ENCODE measurements at regions of chr5 and their contacts with region 1.

Region 1: GRCh38 chr5:148957591-148958202 is 105.2 kb downstream of the SH3TC2 start:
- DNase-seq: peak; percentile 27
- ATAC-seq: peak; percentile 66
- H3K4me3 Mint-ChIP-seq: no peak overlapping the region
- H3K27ac Mint-ChIP-seq: no peak overlapping the region
- H3K4me1 Mint-ChIP-seq: no peaks in the 10 kb centered on the region
- H3K27me3 Mint-ChIP-seq: peaks cover 2% of the 10 kb centered on the region
- CTCF ChIP-seq: no peak

Region 2: GRCh38 chr5:148746826-148747535 is 210.7 kb before region 1 on chr5:
- CTCF ChIA-PET with region 1: interaction called, 548 read pairs
- POLR2A ChIA-PET with region 1: no interaction called
- intact Hi-C with region 1: no loop called
- DNase-seq: no peak
- ATAC-seq: peak; percentile 49
- H3K4me3 Mint-ChIP-seq: no peak overlapping the region
- H3K27ac Mint-ChIP-seq: peak overlapping the region; percentile 36
- H3K4me1 Mint-ChIP-seq: peaks cover 15% of the 10 kb centered on the region
- H3K27me3 Mint-ChIP-seq: no peaks in the 10 kb centered on the region
- CTCF ChIP-seq: no peak

Region 3: GRCh38 chr5:148820461-148821395 is 137.0 kb before region 1 on chr5:
- CTCF ChIA-PET with region 1: interaction called, 55 read pairs
- POLR2A ChIA-PET with region 1: interaction called, 5 read pairs
- intact Hi-C with region 1: loop called (anchors 1 kb)
- DNase-seq: no peak
- ATAC-seq: peak; percentile 48
- H3K4me3 Mint-ChIP-seq: no peak overlapping the region
- H3K27ac Mint-ChIP-seq: no peak overlapping the region
- H3K4me1 Mint-ChIP-seq: peaks cover 56% of the 10 kb centered on the region
- H3K27me3 Mint-ChIP-seq: no peaks in the 10 kb centered on the region
- CTCF ChIP-seq: no peak

Region 4: DNA sequence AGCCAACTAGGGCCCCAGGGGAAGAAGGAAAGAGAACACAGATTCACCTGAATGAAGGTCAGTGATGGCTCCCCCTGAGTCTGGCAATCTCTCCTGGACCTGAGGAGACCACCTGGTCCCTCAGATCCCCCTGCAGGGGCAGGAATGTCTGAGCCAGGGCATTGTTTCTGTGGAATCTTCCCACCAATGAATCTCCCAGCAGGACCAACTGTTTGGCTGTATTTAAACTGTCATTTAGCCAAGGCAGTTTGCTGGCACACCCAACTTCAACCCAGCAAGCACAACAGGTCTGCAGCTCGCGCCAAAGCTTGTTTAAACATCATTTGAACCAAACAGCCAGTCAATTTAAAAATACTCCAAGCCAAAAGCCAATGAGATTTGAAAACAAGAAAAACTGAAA is 12.5 kb after region 1 on chr5:
- CTCF ChIA-PET with region 1: interaction called, 13 read pairs
- POLR2A ChIA-PET with region 1: no interaction called
- intact Hi-C with region 1: no loop called
- DNase-seq: no peak
- ATAC-seq: no peak
- H3K4me3 Mint-ChIP-seq: no peak overlapping the region
- H3K27ac Mint-ChIP-seq: no peak overlapping the region
- H3K4me1 Mint-ChIP-seq: no peaks in the 10 kb centered on the region
- H3K27me3 Mint-ChIP-seq: peaks cover 14% of the 10 kb centered on the region
- CTCF ChIP-seq: no peak

Region 5: DNA sequence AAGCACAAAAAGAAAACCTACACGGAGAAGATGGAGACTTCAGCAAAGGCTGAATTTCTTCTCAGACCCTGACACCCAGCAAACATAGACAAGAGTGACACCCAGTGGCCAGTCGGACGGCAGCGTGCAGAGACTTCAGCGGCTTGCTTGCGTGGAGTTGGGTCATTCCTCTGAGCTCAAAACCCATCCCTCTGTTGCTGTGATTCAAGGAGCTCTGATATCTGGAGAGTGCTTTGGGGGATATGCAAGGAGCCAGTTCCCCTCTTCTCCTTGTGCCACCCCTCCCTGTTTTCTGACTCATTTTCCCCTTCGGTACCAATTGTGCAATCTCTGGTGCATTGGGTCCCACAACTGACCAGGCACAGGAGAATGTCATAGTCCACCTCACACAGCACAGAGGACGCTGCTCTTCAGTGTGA is 77.7 kb after region 1 on chr5:
- CTCF ChIA-PET with region 1: interaction called, 12 read pairs
- POLR2A ChIA-PET with region 1: no interaction called
- intact Hi-C with region 1: loop called (anchors 1 kb)
- DNase-seq: peak; percentile 30
- ATAC-seq: peak; percentile 79
- H3K4me3 Mint-ChIP-seq: no peak overlapping the region
- H3K27ac Mint-ChIP-seq: no peak overlapping the region
- H3K4me1 Mint-ChIP-seq: no peaks in the 10 kb centered on the region
- H3K27me3 Mint-ChIP-seq: peaks cover 16% of the 10 kb centered on the region
- CTCF ChIP-seq: no peak